ENCODE measurements at regions of chr20 and their contacts with region 1.

Region 1: GRCh38 chr20:45032781-45033180 is 66.5 kb downstream of the STK4 start:
- DNase-seq: no peak
- H3K4me3 ChIP-seq: no peak overlapping the region
- H3K27ac ChIP-seq: no peak overlapping the region
- H3K4me1 ChIP-seq: peaks cover 6% of the 10 kb centered on the region; the same call in 1 of the 2 replicates
- H3K27me3 ChIP-seq: no peaks in the 10 kb centered on the region
- CTCF ChIP-seq: no peak

Region 2: DNA sequence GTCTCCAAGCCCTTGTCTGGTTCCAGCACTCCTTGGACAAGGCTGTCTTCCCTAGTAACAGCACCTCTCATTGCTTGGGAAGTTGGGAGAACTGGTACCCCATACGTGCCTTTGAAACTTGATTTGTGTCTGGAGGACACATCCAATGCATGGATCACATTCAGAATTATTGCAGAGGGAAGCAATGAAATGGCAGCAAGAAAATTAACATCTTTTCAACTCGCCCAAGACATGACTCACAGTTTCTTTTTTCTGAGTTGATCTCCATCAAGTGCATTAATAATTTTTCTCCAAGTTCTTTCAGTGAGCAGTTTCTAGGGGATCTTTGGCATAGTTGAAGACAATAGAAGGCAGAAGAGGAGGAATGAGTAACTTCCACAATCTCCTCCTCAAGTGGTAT is 119.6 kb after region 1 on chr20:
- CTCF ChIA-PET with region 1: no interaction called
- POLR2A ChIA-PET with region 1: no interaction called
- intact Hi-C with region 1: no loop called
- DNase-seq: no peak
- H3K4me3 ChIP-seq: no peak overlapping the region
- H3K27ac ChIP-seq: no peak overlapping the region
- H3K4me1 ChIP-seq: peaks cover 19% of the 10 kb centered on the region
- H3K27me3 ChIP-seq: no peaks in the 10 kb centered on the region
- CTCF ChIP-seq: no peak

Region 3: DNA sequence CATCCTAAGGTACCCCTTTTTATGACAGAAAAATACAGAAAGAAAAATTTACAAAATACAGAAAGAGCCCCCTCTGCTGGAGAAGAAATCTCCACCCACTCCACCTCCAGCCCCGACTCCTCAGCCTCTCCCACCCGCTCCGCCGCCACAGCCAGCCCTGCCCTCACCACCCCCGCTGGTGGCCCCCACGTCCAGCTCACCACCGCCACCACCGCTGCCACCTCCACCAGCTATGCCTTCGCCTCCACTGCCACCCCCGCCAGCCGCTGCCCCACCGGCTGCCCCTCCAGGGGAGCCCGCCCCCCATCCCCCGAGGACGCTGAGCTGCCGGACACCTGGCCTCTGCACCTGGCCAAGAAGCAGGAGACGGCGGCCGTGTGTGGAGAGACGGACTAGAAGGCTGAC is 454.5 kb after region 1 on chr20:
- CTCF ChIA-PET with region 1: no interaction called
- POLR2A ChIA-PET with region 1: interaction called, 17 read pairs
- intact Hi-C with region 1: no loop called
- DNase-seq: no peak
- H3K4me3 ChIP-seq: no peak overlapping the region
- H3K27ac ChIP-seq: no peak overlapping the region
- H3K4me1 ChIP-seq: peaks cover 17% of the 10 kb centered on the region
- H3K27me3 ChIP-seq: no peaks in the 10 kb centered on the region
- CTCF ChIP-seq: peak; percentile 21; the same call in 1 of the 2 replicates